ENCODE measurements at regions of chr13 and their contacts with region 1.

Region 1: GRCh38 chr13:32549788-32550187 is 11.2 kb upstream of the N4BP2L2 start:
- DNase-seq: no peak
- CTCF ChIP-seq: no peak

Region 2: DNA sequence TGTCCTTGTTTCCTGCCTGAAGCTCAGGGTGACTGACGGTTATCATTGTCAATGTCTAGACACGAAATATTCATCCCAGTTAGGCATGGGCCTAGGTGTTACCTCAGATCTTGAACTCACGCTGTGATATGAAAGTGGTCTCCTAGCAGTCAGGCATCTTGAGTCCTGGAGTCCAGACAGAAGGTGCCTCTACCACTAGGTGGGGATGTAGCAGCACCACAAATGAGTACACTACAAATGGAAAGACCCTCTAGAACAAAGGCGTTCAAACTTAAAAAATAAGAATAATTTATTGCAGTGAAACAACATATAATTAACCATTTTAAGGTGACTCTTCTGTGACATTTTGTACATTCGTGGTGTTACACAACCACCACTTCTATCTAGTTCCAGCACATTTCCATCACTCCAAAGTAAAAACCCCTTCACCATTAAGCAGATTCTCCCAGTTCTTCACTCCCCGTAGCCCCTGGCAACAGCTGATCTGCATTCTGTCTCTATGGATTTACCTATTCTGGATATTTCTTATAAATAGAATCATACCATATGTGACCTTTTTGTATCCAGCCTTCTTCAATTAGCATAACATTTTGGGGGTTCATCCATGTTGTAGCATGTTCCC is 530.1 kb before region 1 on chr13:
- in situ Hi-C with region 1: loop called (anchors 25 kb)
- DNase-seq: peak; percentile 62
- CTCF ChIP-seq: peak; percentile 64

Region 3: DNA sequence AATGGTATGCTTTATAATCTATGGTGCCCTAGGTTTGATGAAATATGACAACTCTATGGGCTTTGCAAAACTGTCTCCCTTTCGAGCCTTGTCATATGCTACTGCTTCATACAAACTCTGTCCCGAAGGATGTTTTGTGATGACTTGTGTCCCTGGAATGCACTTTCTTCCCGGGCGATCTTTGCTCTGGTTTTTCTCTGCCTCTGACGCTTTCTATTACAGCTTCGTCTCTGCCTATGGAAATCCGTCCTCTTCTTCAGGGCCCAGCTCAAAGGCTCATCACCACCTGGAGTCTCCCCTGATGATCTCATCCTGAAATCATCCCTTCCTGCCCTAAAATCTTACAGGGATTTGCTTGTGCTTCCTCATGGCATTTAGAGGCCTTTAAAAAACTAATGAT is 274.9 kb after region 1 on chr13:
- in situ Hi-C with region 1: no loop called
- DNase-seq: no peak
- CTCF ChIP-seq: no peak